Dendritic cell treated with granulocyte-macrophage colony-stimulating factor and Interleukin-4, amounts not matched to agents 40 ng/mL and 50 ng/mL, for 4 days (primary cell): ENCODE measurements at regions of chr3 and their contacts with region 1.

Region 1: GRCh38 chr3:149129326-149130205 is at the start of gene HPS3:
- H3K4me3 Mint-ChIP-seq: peak within 1 kb of the TSS; percentile 95
- H3K27ac Mint-ChIP-seq: peak within 1 kb of the TSS; percentile 95
- H3K4me1 Mint-ChIP-seq: peaks cover 41% of the 10 kb centered on the region
- H3K27me3 Mint-ChIP-seq: no peaks in the 10 kb centered on the region

Region 2: DNA sequence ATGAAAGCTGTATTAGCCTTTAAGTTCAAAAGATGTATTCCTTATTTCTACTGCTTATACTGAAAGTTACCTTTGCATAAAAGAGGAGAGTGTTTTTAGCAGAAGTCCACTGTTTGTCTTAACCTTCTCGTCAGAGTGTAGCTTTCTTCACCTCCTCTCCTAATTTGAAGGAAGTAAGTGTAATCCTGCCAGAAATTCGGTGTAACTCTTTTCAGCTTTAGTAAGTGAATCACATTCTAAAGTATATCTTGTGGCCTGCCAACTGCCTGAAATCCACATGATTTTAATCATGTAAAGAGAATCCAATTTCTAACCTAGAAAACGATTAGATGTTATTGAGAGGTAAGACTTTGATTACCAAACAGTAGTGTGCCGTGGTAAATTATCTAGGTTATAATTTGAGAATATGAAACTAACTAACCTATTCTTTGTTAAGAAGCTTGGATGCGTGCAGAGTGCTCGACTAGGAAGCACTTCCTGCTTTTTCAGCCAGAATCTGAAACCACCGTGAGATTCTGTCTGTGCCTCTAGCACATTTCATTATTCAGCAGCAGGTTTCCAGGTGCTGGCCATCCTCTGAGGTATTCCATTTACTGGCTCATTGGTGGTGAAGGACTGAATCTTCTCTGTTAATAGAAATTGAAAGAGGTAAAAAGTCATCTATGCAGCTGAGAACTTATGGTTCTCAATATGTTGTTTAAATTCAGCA is 130.7 kb before region 1 on chr3:
- intact Hi-C with region 1: no loop called
- H3K4me3 Mint-ChIP-seq: no peak overlapping the region
- H3K27ac Mint-ChIP-seq: no peak overlapping the region
- H3K4me1 Mint-ChIP-seq: peaks cover 34% of the 10 kb centered on the region
- H3K27me3 Mint-ChIP-seq: no peaks in the 10 kb centered on the region

Region 3: GRCh38 chr3:149145974-149146373 is 16.4 kb after region 1 on chr3:
- intact Hi-C with region 1: loop called (anchors 2 kb)
- H3K4me3 Mint-ChIP-seq: no peak overlapping the region
- H3K27ac Mint-ChIP-seq: no peak overlapping the region
- H3K4me1 Mint-ChIP-seq: peaks cover 22% of the 10 kb centered on the region
- H3K27me3 Mint-ChIP-seq: no peaks in the 10 kb centered on the region

Region 4: GRCh38 chr3:149273096-149273751 is 143.7 kb after region 1 on chr3:
- intact Hi-C with region 1: no loop called
- H3K4me3 Mint-ChIP-seq: no peak overlapping the region
- H3K27ac Mint-ChIP-seq: no peak overlapping the region
- H3K4me1 Mint-ChIP-seq: peaks cover 7% of the 10 kb centered on the region
- H3K27me3 Mint-ChIP-seq: no peaks in the 10 kb centered on the region

Region 5: GRCh38 chr3:149678365-149678948 is 548.9 kb after region 1 on chr3:
- intact Hi-C with region 1: no loop called
- H3K4me3 Mint-ChIP-seq: no peak overlapping the region
- H3K27ac Mint-ChIP-seq: no peak overlapping the region
- H3K4me1 Mint-ChIP-seq: no peaks in the 10 kb centered on the region
- H3K27me3 Mint-ChIP-seq: peaks cover 34% of the 10 kb centered on the region